ENCODE measurements at regions of chr5 and their contacts with region 1.

Region 1: DNA sequence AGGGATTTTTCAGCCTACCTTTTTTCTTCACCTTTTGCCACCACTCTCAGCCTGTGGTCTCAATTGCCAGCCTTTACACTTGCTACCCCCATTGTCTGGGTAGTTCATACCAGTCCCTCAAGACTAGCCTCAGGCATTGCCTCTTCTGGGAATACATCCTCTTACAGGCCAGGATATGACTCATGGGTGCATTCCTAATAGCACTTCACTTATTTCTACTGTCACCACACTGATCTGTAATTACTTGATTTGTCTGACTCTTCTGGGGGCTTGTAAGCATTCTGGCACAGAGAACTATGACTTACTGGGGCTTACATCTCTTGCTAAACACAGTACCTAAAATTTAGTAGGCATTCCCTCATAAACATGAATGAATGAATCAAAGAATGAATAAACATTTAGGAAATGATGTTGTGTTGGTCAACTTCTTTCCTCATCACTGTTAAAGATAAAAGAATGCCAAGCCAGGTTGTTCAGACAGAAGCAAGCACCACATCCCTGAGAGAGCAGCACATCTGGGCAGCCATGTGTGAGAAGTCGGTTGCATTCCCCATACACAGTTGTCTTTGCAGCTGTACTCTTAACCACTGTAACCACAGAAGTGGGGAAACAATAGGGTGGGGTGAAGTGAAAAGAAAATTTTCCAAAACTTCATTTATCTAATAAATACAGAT is 27.6 kb downstream of the IL7R start:
- DNase-seq: no peak
- H3K4me3 Mint-ChIP-seq: peak overlapping the region; percentile 63
- H3K27ac Mint-ChIP-seq: peak overlapping the region; percentile 86
- H3K4me1 Mint-ChIP-seq: peaks cover 35% of the 10 kb centered on the region
- H3K27me3 Mint-ChIP-seq: no peaks in the 10 kb centered on the region

Region 2: DNA sequence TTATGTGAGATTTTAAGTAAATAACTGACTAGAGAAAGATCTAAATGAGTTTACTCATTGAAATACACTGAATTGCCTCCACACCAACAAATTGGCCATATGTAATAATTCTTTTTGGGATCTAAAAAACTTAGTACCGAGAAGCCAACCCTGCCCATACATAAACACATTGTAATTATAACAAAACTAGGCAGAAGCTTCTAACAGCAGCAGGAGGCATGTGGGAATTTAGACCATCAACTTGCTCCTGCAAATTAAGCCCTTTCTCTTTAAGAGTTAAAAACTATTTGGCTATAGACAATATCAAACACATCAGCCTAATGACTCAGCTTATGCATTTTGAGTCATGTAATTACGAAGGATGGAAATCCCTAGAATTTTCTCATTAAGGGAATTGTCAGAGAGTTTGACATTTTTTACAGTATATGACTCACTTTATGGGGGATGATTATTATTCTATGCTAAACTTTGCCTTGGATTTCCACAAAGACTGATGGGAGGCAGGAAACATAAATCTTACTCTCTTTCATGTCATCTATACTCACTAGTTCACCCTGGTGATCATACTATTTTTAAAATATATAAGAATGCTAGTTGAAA is 26.5 kb before region 1 on chr5:
- intact Hi-C with region 1: loop called (anchors 2 kb)
- DNase-seq: peak; percentile 69
- H3K4me3 Mint-ChIP-seq: peak overlapping the region; percentile 76
- H3K27ac Mint-ChIP-seq: peak overlapping the region; percentile 74
- H3K4me1 Mint-ChIP-seq: peaks cover 79% of the 10 kb centered on the region
- H3K27me3 Mint-ChIP-seq: no peaks in the 10 kb centered on the region

Region 3: DNA sequence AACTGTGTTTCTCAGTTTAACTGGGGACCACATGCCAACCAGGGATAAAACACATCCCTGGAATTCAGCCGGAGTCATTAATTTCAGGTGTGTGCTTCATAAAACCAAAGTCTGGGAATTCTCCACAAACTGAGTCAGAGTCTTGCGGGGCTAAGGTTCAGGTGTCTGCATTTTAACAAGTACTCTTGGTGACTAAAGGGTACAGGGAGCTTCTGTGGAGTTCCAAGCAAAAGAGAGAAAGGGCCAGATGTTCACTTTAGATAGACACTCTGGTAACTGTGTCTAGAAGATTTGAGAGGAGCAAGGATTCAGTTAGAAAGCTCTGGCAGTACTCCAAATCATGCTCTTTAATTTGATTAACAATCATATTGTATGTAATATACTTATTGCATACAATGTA is 353.5 kb after region 1 on chr5:
- intact Hi-C with region 1: no loop called
- DNase-seq: no peak
- H3K4me3 Mint-ChIP-seq: no peak overlapping the region
- H3K27ac Mint-ChIP-seq: no peak overlapping the region
- H3K4me1 Mint-ChIP-seq: peaks cover 22% of the 10 kb centered on the region
- H3K27me3 Mint-ChIP-seq: no peaks in the 10 kb centered on the region

Measured in activated CD4-positive, alpha-beta T cell treated with anti-CD3 and anti-CD28 coated beads, Interleukin-2, amount 10 ng/mL, durations not matched to agents 24 days and 14 days (primary cell).